ENCODE measurements at regions of chr1 and their contacts with region 1.

Region 1: DNA sequence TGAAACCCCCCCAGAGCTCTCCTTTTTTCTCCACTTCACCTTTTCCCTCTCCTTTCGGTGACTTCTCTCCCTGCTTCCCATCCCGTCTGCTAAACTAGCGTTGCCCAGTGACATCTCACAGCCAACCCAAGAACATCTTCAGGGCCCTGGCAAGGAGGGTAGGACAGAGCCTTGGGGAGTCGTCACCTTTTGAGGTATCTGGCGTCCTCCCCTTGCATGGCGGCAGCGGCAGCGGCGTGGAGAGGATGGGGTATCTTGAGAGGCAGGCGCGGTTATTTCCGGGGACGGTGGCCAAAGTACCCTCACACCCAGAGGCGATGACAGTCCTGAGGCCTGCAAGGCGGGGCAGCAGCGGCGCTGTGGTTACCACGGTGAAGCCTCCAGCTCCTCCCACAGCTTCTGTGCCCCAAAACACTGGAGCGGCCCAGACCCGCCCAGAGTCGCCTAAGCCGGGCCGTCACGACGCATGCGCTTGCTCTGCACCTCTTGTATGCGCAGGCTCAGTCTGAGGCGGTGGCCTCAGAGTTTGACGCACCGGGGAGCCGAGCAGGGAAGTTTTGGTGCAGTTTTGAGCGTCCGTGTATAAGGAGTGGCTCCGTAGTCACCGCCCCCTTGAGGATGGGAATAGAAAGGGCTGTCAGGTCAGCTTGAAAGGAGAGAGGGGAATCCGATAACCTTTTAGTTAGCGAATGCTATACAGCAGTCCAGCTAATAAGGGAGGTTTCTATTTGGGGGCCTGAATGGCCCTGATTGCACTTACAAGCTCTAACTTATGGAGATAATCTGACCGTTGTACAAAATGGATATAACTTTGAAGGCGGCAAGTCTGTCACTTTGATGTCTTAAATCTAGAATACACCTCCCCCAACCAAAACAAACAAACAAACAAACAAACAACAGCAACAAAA is at the start of gene KIFAP3:
- DNase-seq: peak; percentile 98
- ATAC-seq: peak; percentile 99 to 100 (median 100)
- H3K4me3 ChIP-seq: peak within 1 kb of the TSS; percentile 59 to 85 (median 75)
- H3K27ac ChIP-seq: peak within 1 kb of the TSS; percentile 78 to 95 (median 88)
- H3K4me1 ChIP-seq: peaks cover 0 to 35% (median 27%) of the 10 kb centered on the region in 9 donors
- H3K27me3 ChIP-seq: no peaks in the 10 kb centered on the region
- CTCF ChIP-seq: peak in 8 of 9 donors; percentile 40 to 80 (median 64)
- total RNA-seq, gene KIFAP3: 30.9 to 84.0 (median 60.6) TPM

Region 2: DNA sequence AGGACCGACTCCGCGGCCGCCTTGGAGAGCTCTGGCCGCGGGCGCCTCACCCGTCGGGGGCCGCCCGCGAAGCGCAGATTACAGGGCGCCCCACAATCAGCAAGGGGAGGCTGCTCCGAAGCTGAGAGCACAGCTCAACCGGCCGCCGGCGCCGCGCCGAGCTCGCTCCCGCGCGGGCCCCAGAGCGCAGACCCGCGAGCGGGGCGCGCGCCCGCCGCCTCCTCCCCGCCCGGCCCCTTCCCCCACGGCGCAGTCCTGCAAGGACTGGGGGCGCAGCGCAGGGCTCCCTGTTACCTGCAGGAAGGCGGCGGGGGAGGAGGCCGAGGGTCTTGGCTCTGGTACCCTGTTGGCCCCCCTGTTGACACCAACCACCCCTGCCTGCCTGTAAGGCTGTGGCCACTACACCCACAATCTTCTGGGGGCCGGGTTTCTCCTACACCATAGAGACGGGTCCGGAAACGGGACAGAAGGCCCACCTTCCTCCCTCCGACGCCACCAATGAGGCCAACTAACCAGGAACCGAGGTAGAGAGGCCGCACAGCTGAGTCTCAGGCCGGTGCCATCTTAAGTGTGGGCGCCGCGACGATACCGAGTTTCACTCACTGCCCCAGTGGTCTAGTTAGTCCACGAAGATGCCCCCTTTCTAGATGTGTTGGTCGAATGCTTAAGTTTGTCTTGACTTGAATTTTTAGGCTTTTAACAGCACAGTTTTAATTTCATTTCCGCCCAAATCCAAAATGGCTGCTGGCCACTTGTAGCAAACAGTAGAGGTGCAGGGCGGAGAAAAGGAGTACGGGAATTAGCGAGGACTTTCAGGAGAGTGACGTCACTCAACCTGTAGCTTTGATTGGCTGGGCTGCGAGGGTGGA is 180.8 kb before region 1 on chr1 and contains the start of gene SCYL3:
- intact Hi-C with region 1: loop called in 1 of 10 experiments (anchors 10 kb)
- DNase-seq: peak; percentile 87 to 97
- ATAC-seq: peak; percentile 98 to 100 (median 99)
- H3K4me3 ChIP-seq: peak within 1 kb of the TSS; percentile 85 to 99 (median 96)
- H3K27ac ChIP-seq: peak within 1 kb of the TSS; percentile 86 to 99 (median 97)
- H3K4me1 ChIP-seq: peaks cover 0 to 29% (median 26%) of the 10 kb centered on the region in 9 donors
- H3K27me3 ChIP-seq: peaks cover 0 to 9% (median 0%) of the 10 kb centered on the region in 7 donors
- CTCF ChIP-seq: peak in 1 of 9 donors; percentile 12
- total RNA-seq, gene SCYL3: 3.3 to 8.9 (median 5.7) TPM

Region 3: DNA sequence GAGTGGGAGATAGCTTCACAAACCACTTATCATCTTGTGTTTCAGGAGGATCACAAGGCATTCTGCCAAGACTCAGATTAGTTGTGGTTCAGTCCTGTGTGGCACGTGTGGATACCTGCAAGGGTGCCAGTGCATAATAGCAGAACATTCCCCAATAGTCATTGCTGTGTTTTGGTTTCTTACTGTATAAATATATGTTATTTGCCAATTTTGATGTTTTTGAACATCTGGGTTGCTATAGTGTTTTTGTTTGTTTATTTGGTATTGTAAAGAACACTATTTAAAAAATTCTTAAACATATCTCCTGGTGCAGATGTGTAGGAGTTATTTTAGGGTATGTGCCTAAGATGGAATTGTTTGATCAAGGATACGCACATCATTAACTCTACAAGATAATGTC is 65.9 kb after region 1 on chr1:
- intact Hi-C with region 1: loop called in 4 of 10 experiments (anchors 1 to 10 kb)
- DNase-seq: no peak
- ATAC-seq: no peak
- H3K4me3 ChIP-seq: no peak overlapping the region
- H3K27ac ChIP-seq: no peak overlapping the region
- H3K4me1 ChIP-seq: peaks cover 0 to 7% (median 0%) of the 10 kb centered on the region in 9 donors
- H3K27me3 ChIP-seq: no peaks in the 10 kb centered on the region
- CTCF ChIP-seq: no peak

Region 4: GRCh38 chr1:170200621-170201397 is 126.3 kb after region 1 on chr1:
- intact Hi-C with region 1: loop called in 1 of 10 experiments (anchors 5 kb)
- DNase-seq: no peak
- ATAC-seq: peak in 7 of 8 donors; percentile 34 to 83 (median 61)
- H3K4me3 ChIP-seq: peak overlapping the region in 5 of 10 donors; percentile 14 to 27 (median 16)
- H3K27ac ChIP-seq: peak overlapping the region; percentile 14 to 85 (median 68)
- H3K4me1 ChIP-seq: peaks cover 5 to 46% (median 21%) of the 10 kb centered on the region in 9 donors
- H3K27me3 ChIP-seq: no peaks in the 10 kb centered on the region
- CTCF ChIP-seq: peak in 4 of 9 donors; percentile 25 to 49 (median 36)

Region 5: DNA sequence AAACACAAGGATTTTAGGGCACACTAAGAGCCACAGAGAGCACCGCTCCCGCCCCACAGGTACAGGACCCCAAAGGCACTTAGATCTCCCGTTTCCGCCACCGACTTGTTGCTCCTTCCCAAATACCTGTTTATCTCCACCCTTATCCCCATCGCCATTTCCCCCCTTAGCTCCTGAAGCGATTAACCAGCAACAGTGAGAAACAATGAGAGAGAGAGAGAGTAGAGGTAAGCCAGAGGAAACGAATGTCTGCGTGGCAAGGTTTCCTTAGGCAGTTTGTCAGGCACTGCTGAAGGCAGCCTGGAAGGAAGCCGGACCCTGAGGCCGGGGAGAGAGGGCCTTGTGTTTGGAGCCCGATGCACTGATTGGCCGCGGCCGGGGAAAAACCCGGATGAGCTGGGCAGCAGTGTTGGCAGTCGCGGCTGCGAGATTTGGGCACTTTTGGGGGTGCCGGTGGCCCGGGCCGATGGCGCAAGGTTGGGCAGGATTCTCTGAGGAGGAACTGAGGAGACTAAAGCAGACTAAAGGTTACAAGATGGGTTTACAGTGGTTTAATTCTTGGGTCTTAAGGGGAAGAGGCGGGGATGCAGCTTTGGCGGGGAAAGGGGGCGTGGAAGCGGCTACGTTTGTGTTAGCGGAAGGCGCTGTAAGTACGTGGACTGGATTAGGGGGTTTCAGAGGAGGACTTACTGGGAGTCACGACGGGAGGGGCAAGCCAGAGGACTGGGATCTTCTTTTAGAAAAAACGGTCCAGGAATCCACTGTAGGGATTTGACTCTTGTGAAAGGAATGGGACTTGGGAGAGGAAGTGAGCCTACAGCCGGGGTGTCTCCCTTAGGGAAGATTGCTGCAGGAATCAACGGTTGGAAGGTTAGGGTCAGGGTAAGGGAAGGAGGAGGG is 457.5 kb after region 1 on chr1 and contains the start of gene GORAB:
- intact Hi-C with region 1: loop called in 3 of 10 experiments (anchors 10 kb)
- DNase-seq: peak; percentile 90 to 93
- ATAC-seq: peak; percentile 97 to 99 (median 99)
- H3K4me3 ChIP-seq: peak within 1 kb of the TSS; percentile 41 to 83 (median 68)
- H3K27ac ChIP-seq: peak within 1 kb of the TSS; percentile 78 to 96 (median 94)
- H3K4me1 ChIP-seq: peaks cover 0 to 38% (median 28%) of the 10 kb centered on the region in 9 donors
- H3K27me3 ChIP-seq: no peaks in the 10 kb centered on the region
- CTCF ChIP-seq: no peak
- total RNA-seq, gene GORAB: 5.6 to 14.4 (median 9.4) TPM